Activated T-helper 2 cell treated with anti-CD3 and anti-CD28 coated beads, Interferon-gamma antibody, Interleukin-2, Interleukin-4, amounts not matched to agents 10 μg/mL and 5 μg/mL and 100 μg/mL, durations not matched to agents 14 hours and 24 hours and 36 hours (primary cell): ENCODE measurements at regions of chr18 and their contacts with region 1.

Region 1: GRCh38 chr18:43092539-43092938 is 22.9 kb downstream of the RIT2 start:
- DNase-seq: no peak
- H3K4me3 Mint-ChIP-seq: no peak overlapping the region
- H3K27ac Mint-ChIP-seq: no peak overlapping the region
- H3K4me1 Mint-ChIP-seq: no peaks in the 10 kb centered on the region
- H3K27me3 Mint-ChIP-seq: no peaks in the 10 kb centered on the region

Region 2: DNA sequence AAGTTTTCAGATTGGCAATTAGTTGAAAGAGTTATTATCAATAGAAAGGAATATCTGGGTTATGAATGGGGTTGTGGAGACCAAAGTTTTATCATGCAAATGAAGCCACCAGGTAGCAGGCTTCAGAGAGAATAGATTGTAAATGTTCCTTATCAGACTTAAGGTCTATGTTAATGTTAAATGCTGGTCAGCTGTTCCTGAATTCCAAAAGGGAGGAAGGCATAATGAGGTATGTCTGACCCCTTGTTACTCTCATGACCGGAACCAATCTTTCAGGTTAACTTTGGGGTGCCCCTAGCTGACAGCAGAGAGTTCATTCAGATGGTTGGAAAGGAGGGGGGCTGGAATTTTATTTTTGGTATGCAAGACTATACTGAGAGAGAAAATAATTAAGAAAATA is 25.0 kb before region 1 on chr18:
- intact Hi-C with region 1: loop called (anchors 1 kb)
- DNase-seq: no peak
- H3K4me3 Mint-ChIP-seq: no peak overlapping the region
- H3K27ac Mint-ChIP-seq: no peak overlapping the region
- H3K4me1 Mint-ChIP-seq: no peaks in the 10 kb centered on the region
- H3K27me3 Mint-ChIP-seq: no peaks in the 10 kb centered on the region